CD4-positive, alpha-beta memory T cell (primary cell): ENCODE measurements at regions of chr7 and their contacts with region 1.

Region 1: GRCh38 chr7:139016931-139017511 is 18.8 kb downstream of the ZC3HAV1L start:
- DNase-seq: peak; percentile 56 to 71 (median 63)
- H3K4me3 ChIP-seq: no peak overlapping the region
- H3K4me3 Mint-ChIP-seq: no peak overlapping the region
- H3K27ac ChIP-seq: no peak overlapping the region
- H3K27ac Mint-ChIP-seq: no peak overlapping the region
- H3K4me1 ChIP-seq: no peaks in the 10 kb centered on the region
- H3K4me1 Mint-ChIP-seq: peaks cover 0 to 12% (median 5%) of the 10 kb centered on the region in 4 donors
- H3K27me3 ChIP-seq: no peaks in the 10 kb centered on the region
- H3K27me3 Mint-ChIP-seq: peaks cover 0 to 5% of the 10 kb centered on the region in 2 donors

Region 2: DNA sequence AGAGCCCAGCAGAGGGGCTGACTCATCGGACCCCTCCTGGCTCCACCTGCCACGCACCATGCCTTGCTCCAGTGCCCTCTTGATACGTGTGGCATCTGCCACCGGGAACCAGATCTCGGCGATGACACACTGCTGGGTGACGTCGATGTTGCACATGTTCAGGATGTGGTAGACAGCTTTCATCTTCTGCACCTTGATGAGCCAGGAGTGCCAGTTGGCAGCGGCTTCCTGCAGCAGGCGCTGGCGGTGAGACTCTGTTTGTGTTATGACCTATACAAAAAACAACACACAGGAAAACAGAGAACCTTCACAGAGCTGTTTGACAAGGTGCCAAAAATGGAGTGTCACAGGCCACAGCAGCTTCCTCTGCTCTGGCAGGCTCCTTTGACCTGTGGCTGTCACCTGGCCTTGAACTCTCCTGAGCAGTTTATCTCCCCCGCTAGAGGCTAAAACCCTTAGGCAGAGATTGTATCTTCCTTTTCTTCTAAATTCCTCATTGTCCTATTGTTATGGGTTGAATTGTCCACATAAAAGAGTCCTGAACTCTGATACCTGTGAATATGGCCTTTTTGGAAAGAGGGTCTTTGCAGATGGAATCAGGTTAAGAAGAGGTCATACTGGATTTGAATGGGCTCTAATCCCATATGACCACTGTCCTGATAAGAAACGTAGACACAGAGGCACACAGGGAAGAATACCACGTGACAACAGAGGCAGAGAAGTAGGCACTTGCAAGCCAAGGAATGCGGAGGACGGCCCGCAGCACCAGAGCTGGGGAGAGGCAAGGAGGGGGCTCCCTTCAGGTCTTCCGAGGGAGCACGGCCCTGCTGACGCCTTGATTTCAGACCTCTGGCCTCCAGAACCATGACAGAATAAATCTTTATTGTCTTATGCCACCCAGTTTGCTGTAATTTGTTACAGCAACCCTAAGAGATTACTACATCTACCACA is 264.2 kb before region 1 on chr7:
- CTCF ChIA-PET with region 1: no interaction called
- POLR2A ChIA-PET with region 1: no interaction called
- intact Hi-C with region 1: no loop called
- DNase-seq: peak; percentile 93 to 99 (median 98)
- H3K4me3 ChIP-seq: peak overlapping the region in 1 of 2 donors; percentile 37
- H3K4me3 Mint-ChIP-seq: peak overlapping the region; percentile 28 to 78 (median 60)
- H3K27ac ChIP-seq: peak overlapping the region; percentile 60
- H3K27ac Mint-ChIP-seq: peak overlapping the region; percentile 91 to 98 (median 96)
- H3K4me1 ChIP-seq: peaks cover 36% of the 10 kb centered on the region
- H3K4me1 Mint-ChIP-seq: peaks cover 37 to 79% (median 49%) of the 10 kb centered on the region in 4 donors
- H3K27me3 ChIP-seq: no peaks in the 10 kb centered on the region
- H3K27me3 Mint-ChIP-seq: no peaks in the 10 kb centered on the region

Region 3: DNA sequence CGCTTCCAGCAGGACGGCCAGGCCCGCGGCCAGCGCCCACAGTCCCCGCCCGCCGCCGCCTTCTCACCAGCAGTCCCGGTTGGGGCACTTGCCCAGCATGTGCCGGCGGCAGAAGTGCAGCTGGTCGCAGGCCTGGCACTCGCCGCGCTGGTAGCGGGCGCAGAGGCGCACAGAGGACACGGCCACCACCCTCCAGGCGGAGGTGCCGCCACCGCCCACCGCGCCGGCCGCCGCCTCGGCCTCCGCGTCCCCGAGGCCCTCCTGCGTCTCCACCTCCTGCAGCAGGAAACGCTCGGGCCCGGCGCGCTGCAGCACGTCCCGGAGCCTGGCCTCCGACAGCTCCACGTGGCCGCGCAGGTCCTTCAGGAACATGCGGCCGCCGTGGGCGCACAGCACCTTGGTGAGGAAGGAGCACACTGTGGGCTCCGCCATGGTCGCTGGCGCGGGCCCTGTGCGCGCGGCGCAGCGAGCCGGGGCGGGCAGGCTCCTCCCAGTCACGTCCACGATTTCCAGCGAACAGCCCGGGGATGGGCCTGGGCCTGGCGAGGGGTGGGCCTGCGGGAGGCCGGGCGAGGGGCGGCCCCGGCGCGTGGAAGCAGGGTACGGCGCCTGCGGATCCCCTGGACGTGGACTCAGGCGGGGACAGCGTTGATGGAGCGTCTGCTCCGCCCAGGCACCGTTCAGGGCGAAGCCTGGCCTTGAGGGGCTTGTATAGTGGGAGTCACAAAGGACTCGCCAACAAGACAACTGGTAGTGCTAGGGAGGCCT is 18.7 kb after region 1 on chr7 and contains the start of gene ZC3HAV1L:
- CTCF ChIA-PET with region 1: interaction called, 17 read pairs
- POLR2A ChIA-PET with region 1: interaction called, 4 read pairs
- intact Hi-C with region 1: no loop called
- DNase-seq: peak in 4 of 5 donors; percentile 35 to 48 (median 39)
- H3K4me3 ChIP-seq: peak within 1 kb of the TSS; percentile 14 to 51
- H3K4me3 Mint-ChIP-seq: peak within 1 kb of the TSS; percentile 74 to 88 (median 84)
- H3K27ac ChIP-seq: no peak within 1 kb of the TSS
- H3K27ac Mint-ChIP-seq: peak within 1 kb of the TSS in 3 of 7 donors; percentile 32 to 79 (median 57)
- H3K4me1 ChIP-seq: peaks cover 22% of the 10 kb centered on the region
- H3K4me1 Mint-ChIP-seq: peaks cover 12 to 33% (median 16%) of the 10 kb centered on the region in 4 donors
- H3K27me3 ChIP-seq: no peaks in the 10 kb centered on the region
- H3K27me3 Mint-ChIP-seq: no peaks in the 10 kb centered on the region
- total RNA-seq, gene ZC3HAV1L: 3.8 to 4.6 TPM

Region 4: GRCh38 chr7:139058943-139059342 is 41.9 kb after region 1 on chr7:
- CTCF ChIA-PET with region 1: interaction called, 20 read pairs
- POLR2A ChIA-PET with region 1: interaction called, 3 read pairs
- intact Hi-C with region 1: no loop called
- DNase-seq: no peak
- H3K4me3 ChIP-seq: no peak overlapping the region
- H3K4me3 Mint-ChIP-seq: no peak overlapping the region
- H3K27ac ChIP-seq: no peak overlapping the region
- H3K27ac Mint-ChIP-seq: peak overlapping the region in 5 of 7 donors; percentile 10 to 86 (median 70)
- H3K4me1 ChIP-seq: peaks cover 45% of the 10 kb centered on the region
- H3K4me1 Mint-ChIP-seq: peaks cover 36 to 50% (median 42%) of the 10 kb centered on the region in 4 donors
- H3K27me3 ChIP-seq: no peaks in the 10 kb centered on the region
- H3K27me3 Mint-ChIP-seq: no peaks in the 10 kb centered on the region

Region 5: DNA sequence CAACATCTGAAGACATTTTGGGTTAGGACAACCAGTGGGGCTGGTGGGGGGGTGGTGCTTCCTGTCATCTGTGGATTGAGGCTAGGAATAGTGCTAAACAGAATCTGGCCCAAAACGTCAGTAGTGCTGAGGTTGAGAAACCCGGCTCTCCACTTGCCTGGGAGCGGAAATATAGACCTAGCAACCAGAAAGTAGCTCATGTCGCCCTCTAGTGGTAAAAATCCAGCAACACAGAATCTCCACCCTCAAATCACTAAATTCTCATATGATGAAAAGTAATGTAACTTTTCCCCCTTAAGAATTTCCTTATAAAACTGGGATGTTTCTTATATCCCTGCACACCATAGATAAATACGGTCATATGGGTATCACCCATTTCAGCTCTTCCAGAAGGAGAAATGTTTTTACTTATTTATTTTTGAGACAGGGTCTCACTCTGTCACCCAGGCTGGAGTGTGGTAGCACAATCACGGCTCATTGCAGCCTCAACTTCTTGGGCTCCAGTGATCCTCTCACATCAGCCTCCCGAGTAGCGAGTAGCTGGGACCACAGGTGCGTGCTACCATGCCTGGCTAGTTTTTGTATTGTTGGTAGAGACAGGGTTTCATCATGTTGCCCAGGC is 58.1 kb after region 1 on chr7:
- CTCF ChIA-PET with region 1: interaction called, 140 read pairs
- POLR2A ChIA-PET with region 1: interaction called, 11 read pairs
- intact Hi-C with region 1: loop called (anchors 1 kb)
- DNase-seq: peak; percentile 77 to 84 (median 80)
- H3K4me3 ChIP-seq: no peak overlapping the region
- H3K4me3 Mint-ChIP-seq: peak overlapping the region; percentile 53 to 75 (median 58)
- H3K27ac ChIP-seq: peak overlapping the region; percentile 27
- H3K27ac Mint-ChIP-seq: peak overlapping the region; percentile 86 to 91 (median 88)
- H3K4me1 ChIP-seq: peaks cover 61% of the 10 kb centered on the region
- H3K4me1 Mint-ChIP-seq: peaks cover 38 to 82% (median 59%) of the 10 kb centered on the region in 4 donors
- H3K27me3 ChIP-seq: no peaks in the 10 kb centered on the region
- H3K27me3 Mint-ChIP-seq: no peaks in the 10 kb centered on the region

Region 6: DNA sequence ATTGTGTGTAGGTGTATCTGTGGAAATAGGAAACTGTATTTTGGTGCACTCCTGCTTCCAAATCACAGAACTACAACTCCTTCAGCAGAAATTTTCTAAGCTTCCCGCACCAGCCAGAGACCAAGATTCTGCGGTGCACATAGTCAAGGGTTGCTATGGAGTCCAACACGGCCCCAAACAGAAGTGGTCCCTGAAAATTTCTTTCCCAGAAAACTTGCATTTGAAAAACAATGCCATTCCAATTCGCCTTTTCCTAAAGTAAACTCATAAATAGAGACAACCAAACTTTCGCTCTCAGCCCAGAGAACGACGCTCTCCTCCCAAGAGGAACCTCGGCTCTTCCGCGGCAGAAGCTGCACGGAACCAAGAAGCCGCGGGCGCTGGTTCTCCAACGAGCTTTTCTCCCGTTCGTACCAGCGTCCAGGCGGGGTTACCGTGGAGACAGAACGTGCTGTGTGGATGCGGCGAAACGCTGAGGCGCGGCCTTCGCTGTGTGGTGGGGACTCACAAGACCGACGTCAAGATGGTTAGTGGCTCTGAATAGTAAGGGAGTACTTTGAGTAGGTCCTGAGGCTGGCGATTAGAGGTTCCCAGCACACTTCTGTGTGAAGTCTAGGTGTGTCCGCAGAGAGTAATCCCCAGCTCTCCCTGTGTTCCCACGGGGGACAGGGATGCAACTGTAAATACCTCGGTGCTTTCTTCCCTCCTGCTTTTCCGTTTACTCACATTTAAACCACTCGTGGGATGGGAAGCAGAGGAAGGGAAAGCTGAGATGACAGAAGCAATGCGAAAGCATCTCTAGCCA is 116.5 kb after region 1 on chr7:
- CTCF ChIA-PET with region 1: interaction called, 110 read pairs
- POLR2A ChIA-PET with region 1: interaction called, 11 read pairs
- intact Hi-C with region 1: no loop called
- DNase-seq: peak; percentile 86 to 89 (median 88)
- H3K4me3 ChIP-seq: peak overlapping the region; percentile 25 to 55
- H3K4me3 Mint-ChIP-seq: peak overlapping the region; percentile 87 to 97 (median 92)
- H3K27ac ChIP-seq: peak overlapping the region; percentile 56
- H3K27ac Mint-ChIP-seq: peak overlapping the region; percentile 73 to 97 (median 93)
- H3K4me1 ChIP-seq: peaks cover 14% of the 10 kb centered on the region
- H3K4me1 Mint-ChIP-seq: peaks cover 5 to 22% (median 17%) of the 10 kb centered on the region in 4 donors
- H3K27me3 ChIP-seq: no peaks in the 10 kb centered on the region
- H3K27me3 Mint-ChIP-seq: no peaks in the 10 kb centered on the region